Ovary (tissue), 10 donors: ENCODE measurements at regions of chr1 and their contacts with region 1.

Region 1: GRCh38 chr1:30911046-30911954 is 2.7 kb upstream of the SDC3 start:
- DNase-seq: peak; percentile 83 to 92 (median 88)
- H3K4me3 ChIP-seq: no peak overlapping the region
- H3K27ac ChIP-seq: no peak overlapping the region
- H3K4me1 ChIP-seq: peaks cover 7% of the 10 kb centered on the region
- H3K27me3 ChIP-seq: no peaks in the 10 kb centered on the region
- CTCF ChIP-seq: peak; percentile 49 to 82 (median 82)
- EP300 ChIP-seq: no peak
- POLR2A ChIP-seq: no peak

Region 2: DNA sequence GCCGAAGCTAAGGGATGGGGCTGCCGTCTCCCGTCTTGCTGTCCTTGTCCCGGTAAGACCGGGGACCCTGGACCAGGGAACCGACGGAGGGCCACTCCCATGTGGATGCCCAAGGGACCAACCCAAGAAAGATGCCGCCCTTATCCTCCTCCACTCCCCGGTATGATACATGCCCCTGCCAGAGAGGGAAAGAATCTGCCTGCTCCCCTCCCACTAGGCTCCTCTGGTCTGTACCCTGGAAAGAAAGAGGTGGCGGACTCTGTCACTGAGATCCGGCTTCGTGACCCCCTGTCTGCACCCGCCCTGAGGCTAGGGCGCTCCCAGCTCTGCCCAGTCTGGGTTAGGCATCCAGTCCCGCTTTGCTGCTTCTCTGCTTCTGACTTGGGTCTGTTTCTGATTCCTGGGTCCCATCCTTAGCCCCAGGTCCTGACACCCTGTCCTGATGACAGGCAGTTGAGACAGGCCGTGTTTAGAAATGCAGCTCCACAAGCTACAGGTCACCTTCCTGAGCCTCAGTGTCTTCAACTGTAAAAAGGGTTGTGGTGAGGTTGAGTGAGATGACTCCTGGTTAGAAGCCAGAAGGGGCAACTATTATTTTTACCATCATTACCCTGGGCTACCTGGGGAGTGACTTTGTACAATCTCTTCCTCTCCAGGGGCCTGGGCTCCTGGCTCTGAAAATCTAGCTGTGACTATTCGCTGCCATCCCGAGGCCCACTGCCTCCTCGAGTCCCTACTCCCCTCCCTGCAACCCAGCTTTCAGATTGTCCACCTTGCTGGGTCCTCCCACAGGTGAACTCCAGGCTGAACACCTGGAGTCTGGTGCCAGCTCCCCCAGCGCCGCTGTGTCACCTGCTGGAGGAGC is 191.7 kb before region 1 on chr1:
- intact Hi-C with region 1: loop called in 3 of 4 experiments (anchors 5 to 10 kb)
- DNase-seq: peak in 4 of 5 donors; percentile 30 to 61 (median 53)
- H3K4me3 ChIP-seq: peak overlapping the region; percentile 58
- H3K27ac ChIP-seq: peak overlapping the region; percentile 98 to 100
- H3K4me1 ChIP-seq: peaks cover 1% of the 10 kb centered on the region
- H3K27me3 ChIP-seq: no peaks in the 10 kb centered on the region
- CTCF ChIP-seq: no peak
- EP300 ChIP-seq: no peak
- POLR2A ChIP-seq: no peak

Region 3: GRCh38 chr1:30779294-30780071 is 131.8 kb before region 1 on chr1:
- intact Hi-C with region 1: loop called (anchors 1 to 5 kb)
- DNase-seq: peak; percentile 59 to 88 (median 79)
- H3K4me3 ChIP-seq: no peak overlapping the region
- H3K27ac ChIP-seq: no peak overlapping the region
- H3K4me1 ChIP-seq: no peaks in the 10 kb centered on the region
- H3K27me3 ChIP-seq: no peaks in the 10 kb centered on the region
- CTCF ChIP-seq: peak; percentile 74 to 93 (median 75)
- EP300 ChIP-seq: no peak
- POLR2A ChIP-seq: no peak

Region 4: GRCh38 chr1:30801771-30802198 is 109.5 kb before region 1 on chr1:
- intact Hi-C with region 1: loop called (anchors 2 kb)
- DNase-seq: peak; percentile 67 to 89 (median 84)
- H3K4me3 ChIP-seq: no peak overlapping the region
- H3K27ac ChIP-seq: no peak overlapping the region
- H3K4me1 ChIP-seq: peaks cover 2% of the 10 kb centered on the region
- H3K27me3 ChIP-seq: no peaks in the 10 kb centered on the region
- CTCF ChIP-seq: peak; percentile 81 to 91 (median 91)
- EP300 ChIP-seq: no peak
- POLR2A ChIP-seq: no peak

Region 5: GRCh38 chr1:30952098-30952497 is 40.8 kb after region 1 on chr1:
- intact Hi-C with region 1: no loop called
- DNase-seq: no peak
- H3K4me3 ChIP-seq: no peak overlapping the region
- H3K27ac ChIP-seq: no peak overlapping the region
- H3K4me1 ChIP-seq: peaks cover 2% of the 10 kb centered on the region
- H3K27me3 ChIP-seq: no peaks in the 10 kb centered on the region
- CTCF ChIP-seq: no peak
- EP300 ChIP-seq: no peak
- POLR2A ChIP-seq: no peak

Region 6: GRCh38 chr1:31084782-31085569 is 173.7 kb after region 1 on chr1:
- intact Hi-C with region 1: no loop called
- DNase-seq: no peak
- H3K4me3 ChIP-seq: no peak overlapping the region
- H3K27ac ChIP-seq: no peak overlapping the region
- H3K4me1 ChIP-seq: no peaks in the 10 kb centered on the region
- H3K27me3 ChIP-seq: no peaks in the 10 kb centered on the region
- CTCF ChIP-seq: no peak
- EP300 ChIP-seq: no peak
- POLR2A ChIP-seq: no peak

Region 7: DNA sequence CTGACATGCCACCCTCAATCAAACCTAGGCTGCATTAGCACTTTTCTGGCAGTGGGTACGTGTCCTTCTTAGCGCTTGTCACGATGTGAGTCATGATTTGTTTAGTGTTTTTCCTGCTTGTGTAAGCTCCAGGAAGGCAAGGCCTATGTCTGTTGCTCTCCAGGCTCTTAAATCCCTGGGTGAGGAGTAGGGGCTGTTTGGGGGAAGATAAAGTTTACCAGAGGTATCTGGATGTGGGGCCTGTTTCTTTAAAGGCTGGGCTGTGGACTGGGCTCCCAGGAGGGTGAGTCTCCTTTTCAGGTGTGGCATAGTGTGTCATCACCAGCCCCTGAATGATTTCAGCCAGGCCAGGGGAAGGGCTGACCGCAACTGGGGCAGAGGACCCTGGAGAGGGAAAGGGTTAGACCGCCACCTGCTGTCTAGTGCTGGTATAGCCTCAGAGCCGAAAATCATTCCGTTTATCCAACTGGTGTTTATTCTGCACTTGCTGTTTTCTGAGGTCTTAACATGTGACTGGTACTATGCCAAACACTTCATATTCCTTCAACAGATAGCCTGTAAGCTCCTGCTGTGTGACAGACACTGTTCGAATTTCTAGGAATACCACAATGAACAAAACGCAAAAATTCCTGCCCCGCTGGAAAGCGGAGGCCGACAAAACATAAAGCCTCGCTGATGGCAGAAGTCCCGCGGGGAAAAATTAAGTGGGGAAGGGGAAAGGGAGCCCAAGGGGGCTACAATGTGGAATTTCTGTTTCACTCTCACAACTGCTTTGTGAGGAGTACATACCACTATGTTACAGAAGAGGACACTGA is 511.4 kb after region 1 on chr1:
- intact Hi-C with region 1: loop called in 1 of 4 experiments (anchors 10 kb)
- DNase-seq: peak; percentile 59 to 80 (median 72)
- H3K4me3 ChIP-seq: no peak overlapping the region
- H3K27ac ChIP-seq: no peak overlapping the region
- H3K4me1 ChIP-seq: no peaks in the 10 kb centered on the region
- H3K27me3 ChIP-seq: no peaks in the 10 kb centered on the region
- CTCF ChIP-seq: peak; percentile 80 to 89 (median 82)
- EP300 ChIP-seq: no peak
- POLR2A ChIP-seq: no peak